ENCODE measurements at regions of chr3 and their contacts with region 1.

Region 1: DNA sequence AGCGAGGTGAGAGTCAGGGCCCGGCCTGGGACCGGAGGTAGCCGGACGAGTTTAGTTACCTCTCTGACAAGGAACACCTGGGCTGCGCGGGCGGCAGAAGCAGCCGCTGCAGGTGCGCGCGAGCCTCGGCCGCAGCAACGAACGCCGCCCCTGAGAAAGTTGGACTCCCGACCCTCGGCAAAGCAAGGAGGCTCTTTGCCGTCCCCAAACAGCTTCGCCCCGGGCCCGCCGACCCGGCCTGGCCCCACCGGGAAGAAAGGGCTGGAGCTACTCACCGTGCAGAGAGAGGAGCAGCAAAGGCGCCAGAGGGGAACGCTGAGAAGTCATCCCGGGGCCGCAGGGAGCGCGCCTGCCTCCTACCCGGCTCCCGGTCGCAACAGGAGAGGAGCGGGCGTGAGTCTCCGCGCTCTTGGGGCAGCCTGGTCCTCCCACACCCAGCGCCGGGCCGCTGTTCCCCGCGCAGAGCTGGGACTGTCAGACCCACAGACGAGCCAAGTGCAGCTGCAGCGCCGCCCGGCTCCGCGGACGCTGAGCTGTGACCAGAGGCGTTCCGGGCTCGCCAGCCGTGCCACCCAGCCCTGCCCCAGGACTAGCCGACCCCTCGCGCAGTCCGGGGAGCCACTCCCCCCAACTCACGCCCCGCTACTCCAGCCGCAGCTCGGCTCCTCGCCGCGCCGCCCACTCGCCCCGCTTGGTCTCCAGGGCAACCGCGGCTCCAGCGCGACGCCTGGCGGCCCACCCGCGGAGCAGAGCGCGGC is at the start of gene IGSF11:
- DNase-seq: peak; percentile 85
- ATAC-seq: peak; percentile 96
- total RNA-seq, gene IGSF11: 19.8 TPM

Region 2: DNA sequence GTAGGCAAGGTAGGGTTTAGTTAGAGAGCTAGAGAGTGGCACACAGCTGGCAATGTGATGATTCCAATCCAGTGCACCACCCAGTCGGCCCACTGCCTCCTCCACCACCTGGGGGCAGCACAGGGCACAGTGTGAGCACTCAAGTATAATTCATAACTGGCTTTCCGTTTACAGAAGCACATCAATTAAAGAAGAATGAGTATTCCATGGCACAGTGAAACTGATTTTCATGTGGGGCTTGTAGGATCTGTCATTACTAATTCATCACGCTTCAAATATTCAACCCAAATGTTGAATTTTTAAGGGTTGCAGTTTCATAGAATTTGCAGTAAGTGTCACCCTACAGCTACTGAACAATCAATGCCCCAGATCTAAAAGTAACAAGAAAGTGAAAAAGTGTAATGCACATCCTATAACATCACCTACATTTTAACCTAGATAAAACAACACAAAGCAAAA is 149.7 kb before region 1 on chr3:
- intact Hi-C with region 1: loop called (anchors 10 kb)
- DNase-seq: peak; percentile 87
- ATAC-seq: peak; percentile 78